MCF 10A (cell line): ENCODE measurements at regions of chr4 and their contacts with region 1.

Region 1: DNA sequence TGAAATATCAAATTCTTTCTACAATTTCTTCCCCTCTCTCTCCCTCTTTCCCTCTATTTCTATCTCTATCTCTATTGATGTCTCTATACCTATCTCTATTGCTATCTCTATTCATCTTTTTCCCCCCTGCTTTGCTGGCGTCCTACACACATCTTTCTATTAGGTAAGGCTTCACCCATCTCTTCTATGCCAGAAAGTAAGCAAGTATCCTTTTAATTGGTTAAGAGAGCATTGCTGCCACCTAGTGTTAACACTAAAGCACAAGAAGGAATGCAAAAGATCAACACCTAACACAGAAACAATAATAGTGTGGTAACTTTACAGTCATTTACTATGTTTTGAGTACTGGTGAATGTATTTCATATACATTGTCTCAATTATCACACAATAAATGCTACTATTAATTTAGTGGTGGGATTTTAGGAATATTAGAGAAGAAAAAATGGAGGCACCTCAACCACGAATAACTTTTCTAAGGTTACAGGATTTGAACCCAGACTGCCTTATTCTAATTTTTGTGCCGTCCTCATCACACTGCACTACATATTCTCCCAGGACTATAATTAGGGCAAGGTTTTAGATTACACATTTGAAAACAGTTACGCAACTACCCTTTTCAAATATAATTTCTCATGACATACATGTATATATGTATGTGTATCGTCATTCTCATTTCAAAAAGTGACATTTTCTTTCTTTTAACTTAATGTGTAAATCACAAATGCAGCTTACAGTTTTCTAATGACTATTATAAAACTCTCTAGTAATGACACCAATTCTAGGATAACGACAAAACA is 3.7 kb upstream of the C4orf36 start:
- DNase-seq: peak; percentile 83
- H3K4me3 Mint-ChIP-seq: no peak overlapping the region
- H3K27ac Mint-ChIP-seq: no peak overlapping the region
- H3K4me1 Mint-ChIP-seq: peaks cover 7% of the 10 kb centered on the region
- H3K27me3 Mint-ChIP-seq: no peaks in the 10 kb centered on the region
- CTCF ChIP-seq: peak; percentile 61

Region 2: GRCh38 chr4:86522349-86522748 is 373.5 kb before region 1 on chr4:
- CTCF ChIA-PET with region 1: interaction called, 11 read pairs
- POLR2A ChIA-PET with region 1: interaction called, 4 read pairs
- intact Hi-C with region 1: loop called (anchors 1 kb)
- DNase-seq: peak; percentile 17
- H3K4me3 Mint-ChIP-seq: no peak overlapping the region
- H3K27ac Mint-ChIP-seq: no peak overlapping the region
- H3K4me1 Mint-ChIP-seq: no peaks in the 10 kb centered on the region
- H3K27me3 Mint-ChIP-seq: no peaks in the 10 kb centered on the region
- CTCF ChIP-seq: peak; percentile 43

Region 3: DNA sequence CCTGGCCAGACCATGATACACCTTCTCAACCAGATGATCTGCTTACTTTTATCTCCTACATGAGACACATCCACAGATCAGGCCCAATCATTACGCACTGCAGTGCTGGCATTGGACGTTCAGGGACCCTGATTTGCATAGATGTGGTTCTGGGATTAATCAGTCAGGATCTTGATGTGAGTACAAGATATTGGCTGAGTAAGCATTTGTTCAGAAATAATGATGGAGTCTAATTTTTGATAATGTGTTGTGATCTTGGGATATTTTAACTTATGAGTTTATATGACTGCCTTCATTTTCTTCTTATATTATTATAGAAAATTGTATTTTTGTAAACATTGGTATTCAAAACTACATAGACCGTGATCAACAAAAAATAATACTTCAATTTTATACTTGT is 86.1 kb before region 1 on chr4:
- CTCF ChIA-PET with region 1: no interaction called
- POLR2A ChIA-PET with region 1: interaction called, 7 read pairs
- intact Hi-C with region 1: loop called (anchors 10 kb)
- DNase-seq: no peak
- H3K4me3 Mint-ChIP-seq: no peak overlapping the region
- H3K27ac Mint-ChIP-seq: no peak overlapping the region
- H3K4me1 Mint-ChIP-seq: no peaks in the 10 kb centered on the region
- H3K27me3 Mint-ChIP-seq: no peaks in the 10 kb centered on the region
- CTCF ChIP-seq: no peak

Region 4: DNA sequence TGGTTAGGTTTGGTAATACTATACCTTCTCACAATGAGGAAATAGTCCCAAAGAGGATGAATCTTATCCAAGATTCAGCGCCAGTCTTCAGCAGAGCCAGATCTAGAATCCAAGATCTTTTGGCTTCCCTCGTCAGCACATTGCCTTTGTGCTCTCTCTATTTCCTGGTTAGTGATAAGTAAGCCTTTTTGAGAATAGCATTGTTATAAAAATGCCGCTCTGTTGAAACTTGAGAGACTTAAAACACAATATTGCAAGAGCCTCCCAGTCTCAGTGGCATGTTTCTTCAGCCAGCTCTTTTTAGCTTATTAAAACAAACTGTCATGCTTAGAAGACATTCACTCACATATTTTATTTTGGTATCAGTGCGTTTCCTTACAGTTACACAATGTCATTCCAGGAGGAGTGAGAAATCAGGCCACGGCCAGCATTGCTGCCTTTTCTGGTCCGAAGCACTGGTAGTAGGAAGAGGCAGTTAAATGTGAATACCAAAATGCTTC is 183.1 kb after region 1 on chr4:
- CTCF ChIA-PET with region 1: no interaction called
- POLR2A ChIA-PET with region 1: no interaction called
- intact Hi-C with region 1: no loop called
- DNase-seq: peak; percentile 34
- H3K4me3 Mint-ChIP-seq: no peak overlapping the region
- H3K27ac Mint-ChIP-seq: no peak overlapping the region
- H3K4me1 Mint-ChIP-seq: peaks cover 40% of the 10 kb centered on the region
- H3K27me3 Mint-ChIP-seq: no peaks in the 10 kb centered on the region
- CTCF ChIP-seq: no peak

Region 5: DNA sequence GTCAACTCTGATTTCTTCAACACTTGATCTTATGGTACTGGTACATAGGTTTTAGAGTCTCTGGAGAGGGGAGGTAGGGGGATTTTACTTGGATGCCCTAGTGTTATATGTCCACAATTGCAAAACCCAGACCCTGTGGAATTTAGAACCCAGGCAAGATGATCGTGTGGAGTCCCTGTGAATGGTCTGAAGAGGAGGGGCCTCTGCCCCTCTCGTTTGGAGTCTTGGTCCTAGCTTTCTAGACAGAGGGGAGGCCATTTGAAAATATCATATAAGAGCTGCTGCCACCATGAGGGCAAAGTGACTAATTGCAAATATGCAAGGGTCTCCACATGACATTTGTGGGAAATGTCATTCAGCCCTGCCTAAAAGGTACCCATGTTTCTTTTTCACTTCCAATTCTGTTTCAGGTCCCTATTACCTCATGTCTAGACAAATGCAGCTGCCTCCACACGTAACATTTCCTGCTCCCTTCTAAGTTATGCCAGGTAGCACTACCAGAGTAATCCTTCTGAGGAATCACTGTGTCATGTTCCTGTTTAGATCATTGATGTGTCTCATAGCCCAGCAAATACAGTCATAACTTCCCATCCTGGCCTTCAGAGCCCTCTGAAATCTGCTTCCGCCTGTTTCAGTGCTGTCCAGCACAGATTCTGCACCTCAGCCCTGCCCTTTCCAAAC is 197.7 kb after region 1 on chr4:
- CTCF ChIA-PET with region 1: interaction called, 3 read pairs
- POLR2A ChIA-PET with region 1: no interaction called
- intact Hi-C with region 1: loop called (anchors 1 kb)
- DNase-seq: peak; percentile 59
- H3K4me3 Mint-ChIP-seq: peak overlapping the region; percentile 23
- H3K27ac Mint-ChIP-seq: peak overlapping the region; percentile 87
- H3K4me1 Mint-ChIP-seq: peaks cover 25% of the 10 kb centered on the region
- H3K27me3 Mint-ChIP-seq: no peaks in the 10 kb centered on the region
- CTCF ChIP-seq: peak; percentile 57

Region 6: GRCh38 chr4:87235020-87235671 is 339.3 kb after region 1 on chr4:
- CTCF ChIA-PET with region 1: no interaction called
- POLR2A ChIA-PET with region 1: no interaction called
- intact Hi-C with region 1: loop called (anchors 1 kb)
- DNase-seq: no peak
- H3K4me3 Mint-ChIP-seq: peak overlapping the region; percentile 74
- H3K27ac Mint-ChIP-seq: peak overlapping the region; percentile 79
- H3K4me1 Mint-ChIP-seq: peaks cover 6% of the 10 kb centered on the region
- H3K27me3 Mint-ChIP-seq: no peaks in the 10 kb centered on the region
- CTCF ChIP-seq: no peak